Activated T-helper 1 cell treated with anti-CD3 and anti-CD28 coated beads, Interleukin-12 subunit alpha, Interleukin-12 subunit beta, Interleukin-2, Interleukin-4 antibody, amounts not matched to agents 30 ng/mL and 10 ng/mL and 1 ng/mL, durations not matched to agents 14 hours and 24 hours and 36 hours (primary cell): ENCODE measurements at regions of chr4 and their contacts with region 1.

Region 1: GRCh38 chr4:118278473-118279274 is 74.1 kb downstream of the PRSS12 start:
- DNase-seq: peak; percentile 94
- H3K4me3 Mint-ChIP-seq: peak overlapping the region; percentile 88
- H3K27ac Mint-ChIP-seq: peak overlapping the region; percentile 92
- H3K4me1 Mint-ChIP-seq: peaks cover 44% of the 10 kb centered on the region
- H3K27me3 Mint-ChIP-seq: peaks cover 2% of the 10 kb centered on the region

Region 2: DNA sequence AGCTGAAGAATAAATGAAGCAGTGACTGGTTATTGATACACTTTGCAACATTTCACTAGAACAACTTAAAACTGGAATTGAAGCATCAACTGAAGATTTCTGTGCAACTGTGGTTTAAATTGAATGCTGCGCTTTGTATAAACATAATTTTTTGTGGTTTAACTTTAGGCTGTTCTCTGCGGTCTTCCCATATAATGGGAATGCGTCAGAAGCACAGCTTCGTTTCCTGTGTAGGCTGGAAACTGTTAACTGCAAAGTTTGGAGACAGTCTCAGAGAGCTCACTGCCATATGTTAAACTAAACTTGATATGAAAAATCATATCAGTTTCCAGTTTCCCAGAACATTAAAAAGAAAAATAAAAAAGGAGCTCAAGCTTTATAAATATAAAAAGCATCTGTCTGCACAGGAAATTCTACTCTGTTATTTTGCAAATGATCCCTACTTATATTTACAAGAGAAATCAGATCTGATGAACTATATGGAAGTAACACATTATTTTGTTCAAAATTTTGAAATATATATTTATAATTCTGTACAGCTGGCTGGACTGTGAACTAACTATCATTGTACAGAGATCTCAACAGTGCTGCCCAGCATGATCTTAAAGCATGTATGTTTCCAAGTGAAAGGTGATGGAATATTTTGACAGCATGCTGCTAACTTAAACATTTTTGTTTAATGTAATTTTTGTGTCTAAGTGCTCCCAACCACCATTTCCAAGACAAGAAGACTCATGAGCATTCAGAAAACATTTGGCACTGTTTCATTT is 104.5 kb before region 1 on chr4:
- intact Hi-C with region 1: loop called (anchors 5 kb)
- DNase-seq: no peak
- H3K4me3 Mint-ChIP-seq: no peak overlapping the region
- H3K27ac Mint-ChIP-seq: no peak overlapping the region
- H3K4me1 Mint-ChIP-seq: peaks cover 40% of the 10 kb centered on the region
- H3K27me3 Mint-ChIP-seq: no peaks in the 10 kb centered on the region

Region 3: GRCh38 chr4:118352843-118353533 is 74.3 kb after region 1 on chr4 and contains the start of gene PRSS12:
- intact Hi-C with region 1: loop called (anchors 1 kb)
- DNase-seq: peak; percentile 44
- H3K4me3 Mint-ChIP-seq: peak within 1 kb of the TSS; percentile 80
- H3K27ac Mint-ChIP-seq: no peak within 1 kb of the TSS
- H3K4me1 Mint-ChIP-seq: peaks cover 16% of the 10 kb centered on the region
- H3K27me3 Mint-ChIP-seq: peaks cover 57% of the 10 kb centered on the region
- total RNA-seq, gene PRSS12: not detected in 2 replicates

Region 4: DNA sequence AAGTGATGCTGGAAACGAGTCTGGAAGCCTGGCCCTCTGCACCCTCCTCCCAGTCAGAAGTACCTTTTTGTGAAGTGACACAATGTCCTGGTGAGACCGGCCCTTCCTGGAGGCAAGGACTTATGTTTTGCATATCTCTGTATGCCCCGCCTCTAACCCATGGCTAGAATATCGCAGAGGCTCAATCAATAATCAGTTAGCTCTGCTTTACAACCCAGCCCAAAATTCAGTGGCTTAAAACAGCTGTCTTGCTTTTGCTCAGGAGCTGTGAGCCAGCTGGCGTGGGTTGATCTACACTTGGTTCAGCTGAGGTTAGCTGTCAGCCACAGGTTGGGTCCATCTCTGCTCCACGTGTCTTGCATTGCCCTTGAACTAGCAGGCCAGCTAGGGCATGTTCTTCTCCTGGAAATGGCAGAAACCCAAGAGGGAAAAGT is 307.7 kb after region 1 on chr4:
- intact Hi-C with region 1: loop called (anchors 1 kb)
- DNase-seq: no peak
- H3K4me3 Mint-ChIP-seq: no peak overlapping the region
- H3K27ac Mint-ChIP-seq: no peak overlapping the region
- H3K4me1 Mint-ChIP-seq: peaks cover 14% of the 10 kb centered on the region
- H3K27me3 Mint-ChIP-seq: peaks cover 21% of the 10 kb centered on the region

Region 5: DNA sequence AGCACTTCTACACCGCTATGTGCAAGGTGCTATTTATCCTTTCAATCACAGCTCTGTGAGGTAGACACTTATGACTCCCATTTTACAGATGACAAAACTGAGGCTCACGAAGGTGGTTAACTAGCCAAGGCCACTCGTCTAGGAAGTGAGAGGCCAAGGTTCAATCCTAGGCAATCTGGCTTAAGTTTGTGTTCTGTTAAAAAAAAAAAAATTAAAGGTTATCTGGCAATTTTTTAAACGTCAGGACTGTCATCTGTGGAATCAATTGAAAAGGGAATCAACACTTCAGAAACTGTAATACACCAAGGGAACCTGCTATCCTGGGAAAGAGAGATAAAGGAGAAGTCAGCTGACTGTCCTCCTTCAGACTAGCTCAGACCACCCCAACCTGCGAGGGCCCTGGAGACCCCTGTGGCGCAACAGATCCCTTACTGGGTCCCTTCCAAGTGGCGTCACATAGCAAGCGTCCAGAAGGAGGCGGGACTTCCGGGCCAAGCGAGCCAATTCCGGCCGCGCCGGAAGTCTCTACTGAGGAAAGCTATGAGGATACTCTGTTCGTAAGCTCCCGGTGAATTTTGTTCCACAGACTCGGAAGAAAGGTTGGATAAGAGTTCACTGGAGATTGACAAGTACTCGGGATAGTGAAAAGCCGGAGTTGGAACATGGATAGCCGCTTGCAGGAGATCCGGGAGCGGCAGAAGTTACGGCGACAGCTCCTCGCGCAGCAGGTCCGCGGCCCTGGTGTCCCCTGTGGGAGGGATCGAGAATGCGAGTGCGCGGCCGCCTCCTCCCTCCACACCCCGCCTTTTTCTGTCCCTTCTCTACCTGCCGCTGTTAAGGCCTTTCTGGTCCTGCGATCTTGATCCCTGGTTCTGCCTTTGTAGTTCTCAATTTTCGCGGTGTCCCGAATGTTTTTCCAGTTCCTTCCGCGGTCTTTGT is 406.5 kb after region 1 on chr4 and contains the start of gene METTL14:
- intact Hi-C with region 1: loop called (anchors 1 kb)
- DNase-seq: peak; percentile 83
- H3K4me3 Mint-ChIP-seq: peak within 1 kb of the TSS; percentile 97
- H3K27ac Mint-ChIP-seq: peak within 1 kb of the TSS; percentile 88
- H3K4me1 Mint-ChIP-seq: peaks cover 28% of the 10 kb centered on the region
- H3K27me3 Mint-ChIP-seq: no peaks in the 10 kb centered on the region
- total RNA-seq, gene METTL14: 44.6 and 48.3 TPM in 2 replicates

Region 6: DNA sequence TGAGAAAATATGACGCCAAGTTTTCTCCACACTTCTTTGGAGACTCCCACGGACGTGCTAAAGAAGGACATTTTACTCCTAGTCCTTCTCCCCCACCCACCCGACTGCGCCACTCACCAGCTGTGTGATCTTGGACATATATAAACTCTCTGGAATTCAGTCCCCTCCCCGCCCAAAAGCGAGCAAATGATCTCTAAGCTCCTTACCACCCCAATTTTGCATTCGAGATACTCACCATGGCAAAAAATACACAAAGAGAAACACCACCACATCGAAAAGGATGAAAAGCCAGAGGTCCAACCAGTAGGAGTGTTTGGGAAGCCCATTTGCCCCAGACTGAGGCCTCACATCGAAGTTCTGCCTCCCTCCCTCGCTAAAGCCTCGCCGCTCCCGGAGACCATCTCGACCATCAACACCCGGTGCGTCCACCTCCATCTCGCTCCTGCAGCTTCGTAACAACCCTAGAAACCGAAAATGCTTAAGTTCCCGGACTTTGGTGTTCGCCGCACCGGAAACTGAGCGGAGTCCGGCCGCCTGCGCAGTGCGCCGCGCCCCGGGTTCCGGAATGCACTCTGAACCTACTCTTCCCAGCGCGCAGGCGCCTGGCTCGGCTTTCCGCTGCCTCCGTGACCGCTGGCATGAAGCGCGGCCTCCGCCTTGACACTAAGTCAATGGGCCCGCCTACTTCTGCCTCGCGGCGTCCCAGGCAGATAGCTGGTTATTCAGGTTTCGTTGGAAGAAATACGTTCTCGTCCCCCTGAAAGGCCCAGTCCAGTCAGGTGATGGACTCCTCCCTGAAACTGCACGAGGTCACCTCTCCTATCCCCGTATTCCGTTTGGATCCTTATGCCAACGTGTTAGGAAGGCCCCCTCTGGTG is 1021.7 kb after region 1 on chr4:
- intact Hi-C with region 1: loop called (anchors 2 kb)
- DNase-seq: peak; percentile 93
- H3K4me3 Mint-ChIP-seq: peak overlapping the region; percentile 97
- H3K27ac Mint-ChIP-seq: peak overlapping the region; percentile 97
- H3K4me1 Mint-ChIP-seq: peaks cover 38% of the 10 kb centered on the region
- H3K27me3 Mint-ChIP-seq: no peaks in the 10 kb centered on the region

Region 7: GRCh38 chr4:119628308-119629141 is 1349.9 kb after region 1 on chr4 and contains the start of gene PDE5A:
- intact Hi-C with region 1: loop called (anchors 5 kb)
- DNase-seq: peak; percentile 67
- H3K4me3 Mint-ChIP-seq: peak within 1 kb of the TSS; percentile 86
- H3K27ac Mint-ChIP-seq: no peak within 1 kb of the TSS
- H3K4me1 Mint-ChIP-seq: peaks cover 23% of the 10 kb centered on the region
- H3K27me3 Mint-ChIP-seq: peaks cover 50% of the 10 kb centered on the region
- total RNA-seq, gene PDE5A: 0.10 TPM in 1 of 2 replicates, not detected in the other